Dorsolateral prefrontal cortex (tissue), 120 donors: ENCODE measurements at regions of chr3 and their contacts with region 1.

Region 1: DNA sequence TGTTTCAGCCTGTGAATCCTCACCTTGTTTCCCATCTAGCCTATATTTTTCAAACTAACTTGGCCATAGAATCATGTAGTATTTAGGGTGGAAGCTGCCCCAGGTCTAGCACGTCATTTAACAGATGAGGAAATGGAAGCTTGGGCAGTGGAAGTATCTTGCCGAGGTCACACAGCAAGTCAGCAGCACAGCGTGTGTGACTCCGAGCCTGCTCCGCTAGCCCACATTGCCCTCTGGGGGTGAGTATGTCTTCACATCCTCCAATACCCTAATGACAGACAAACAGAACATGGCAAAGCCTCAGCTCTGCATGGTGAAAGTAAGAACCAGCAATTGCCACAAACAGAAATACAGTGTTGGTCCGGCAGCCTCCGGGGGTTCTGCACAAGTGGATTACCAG is 2.2 kb upstream of the CCR5 start:
- DNase-seq: peak in 7 of 10 donors; percentile 10 to 55 (median 44)
- H3K4me3 ChIP-seq: peak overlapping the region in 11 of 59 donors; percentile 9 to 49 (median 28)
- H3K27ac ChIP-seq: peak overlapping the region in 2 of 59 donors; percentile 12 to 31
- H3K27me3 ChIP-seq: peaks cover 0 to 21% (median 0%) of the 10 kb centered on the region in 45 donors
- CTCF ChIP-seq: peak in 40 of 56 donors; percentile 14 to 56 (median 34)

Region 2: GRCh38 chr3:45938864-45939263 is 429.7 kb before region 1 on chr3:
- intact Hi-C with region 1: loop called (anchors 5 to 10 kb)
- DNase-seq: peak; percentile 70 to 97 (median 88)
- H3K4me3 ChIP-seq: no peak overlapping the region
- H3K27ac ChIP-seq: peak overlapping the region in 41 of 59 donors; percentile 3 to 85 (median 51)
- H3K27me3 ChIP-seq: no peaks in the 10 kb centered on the region
- CTCF ChIP-seq: peak; percentile 77 to 98 (median 92)

Region 3: DNA sequence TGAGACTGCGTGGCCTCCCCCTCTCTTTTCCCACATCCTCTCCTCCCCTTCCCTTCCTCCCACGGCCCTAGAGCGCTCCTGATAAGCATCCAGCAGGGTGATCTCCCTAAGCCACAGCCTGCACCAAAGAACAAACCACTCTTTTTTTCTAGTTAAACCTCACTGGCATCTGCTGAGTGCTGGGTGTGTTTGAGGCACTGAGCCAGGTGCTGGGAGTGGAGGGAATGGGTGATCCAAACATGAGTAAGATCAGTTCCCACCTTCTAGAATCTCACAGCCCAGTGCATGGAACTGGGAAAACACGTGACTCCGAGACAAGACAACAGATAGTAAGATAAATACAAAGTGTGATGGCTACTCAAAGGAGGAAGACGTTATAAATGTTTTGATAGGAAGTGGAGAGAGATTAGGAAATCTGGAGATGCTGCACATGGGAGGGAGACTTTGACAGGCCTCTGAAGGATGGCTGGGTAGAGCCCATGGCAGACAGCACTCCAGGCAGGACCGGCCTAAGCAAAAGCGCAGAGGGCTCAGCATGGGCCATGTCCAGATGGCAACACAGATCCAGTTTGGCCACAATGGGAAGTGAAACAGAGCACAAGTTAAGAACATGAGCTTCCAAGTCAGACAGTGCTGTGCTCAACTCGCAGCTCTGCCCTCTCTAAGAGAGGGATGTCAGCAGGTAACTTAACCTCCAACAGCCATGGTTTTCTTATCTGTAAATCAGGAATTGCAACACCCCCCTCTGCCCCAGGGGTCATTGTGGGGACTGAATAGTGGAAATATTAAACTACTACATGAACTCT is 70.7 kb before region 1 on chr3:
- intact Hi-C with region 1: loop called in 1 of 2 experiments (anchors 5 kb)
- DNase-seq: peak in 2 of 10 donors; percentile 21 to 34
- H3K4me3 ChIP-seq: no peak overlapping the region
- H3K27ac ChIP-seq: peak overlapping the region in 12 of 59 donors; percentile 13 to 44 (median 30)
- H3K27me3 ChIP-seq: no peaks in the 10 kb centered on the region
- CTCF ChIP-seq: no peak